ENCODE measurements at regions of chr1 and their contacts with region 1.

Region 1: DNA sequence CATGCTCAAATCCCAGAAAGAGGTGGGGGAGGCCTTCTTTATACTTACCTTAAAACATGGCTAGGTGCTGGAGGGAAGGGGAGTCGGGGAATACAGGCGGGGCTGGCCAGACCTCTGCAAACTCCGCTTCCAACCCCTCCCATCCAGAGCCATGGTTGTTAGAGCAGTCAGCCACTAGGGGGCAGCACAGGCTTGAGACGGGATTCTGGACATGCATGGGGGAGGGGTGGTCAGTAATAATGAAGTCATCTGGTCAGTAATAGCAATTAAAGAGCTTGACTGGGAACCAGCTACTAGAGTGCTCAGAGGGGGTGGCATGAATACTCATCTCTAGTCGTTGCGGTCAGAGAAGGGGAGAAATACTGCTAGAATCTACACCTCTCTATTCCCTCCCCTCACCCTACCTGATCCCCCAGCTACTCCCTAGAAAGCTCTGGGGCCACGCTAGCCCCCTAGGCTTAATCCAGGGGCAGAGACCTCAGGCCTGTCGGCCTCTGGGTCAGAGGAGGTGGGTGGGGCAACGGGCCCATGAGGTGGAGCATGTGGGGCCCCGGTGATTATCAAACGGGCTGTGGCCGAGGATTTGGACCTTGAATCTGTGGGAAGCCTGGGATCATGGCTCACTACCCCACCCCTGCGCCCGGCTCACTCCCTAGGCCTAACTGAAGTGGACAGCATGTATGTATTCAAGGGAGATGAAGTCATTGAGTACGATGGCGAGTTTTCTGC is 2.9 kb downstream of the CASQ1 start:
- DNase-seq: peak; percentile 86
- ATAC-seq: peak; percentile 93
- H3K4me3 Mint-ChIP-seq: no peak overlapping the region
- H3K27ac Mint-ChIP-seq: no peak overlapping the region
- H3K4me1 Mint-ChIP-seq: no peaks in the 10 kb centered on the region
- H3K27me3 Mint-ChIP-seq: peaks cover 2% of the 10 kb centered on the region
- CTCF ChIP-seq: peak; percentile 94

Region 2: GRCh38 chr1:160205242-160206035 is 12.2 kb after region 1 on chr1 and contains the start of gene PEA15:
- CTCF ChIA-PET with region 1: interaction called, 22 read pairs
- POLR2A ChIA-PET with region 1: interaction called, 6 read pairs
- intact Hi-C with region 1: no loop called
- DNase-seq: peak; percentile 70
- ATAC-seq: peak; percentile 76
- H3K4me3 Mint-ChIP-seq: peak within 1 kb of the TSS; percentile 82
- H3K27ac Mint-ChIP-seq: peak within 1 kb of the TSS; percentile 87
- H3K4me1 Mint-ChIP-seq: peaks cover 48% of the 10 kb centered on the region
- H3K27me3 Mint-ChIP-seq: no peaks in the 10 kb centered on the region
- CTCF ChIP-seq: no peak
- total RNA-seq, gene PEA15: 31.8 to 34.1 TPM

Region 3: DNA sequence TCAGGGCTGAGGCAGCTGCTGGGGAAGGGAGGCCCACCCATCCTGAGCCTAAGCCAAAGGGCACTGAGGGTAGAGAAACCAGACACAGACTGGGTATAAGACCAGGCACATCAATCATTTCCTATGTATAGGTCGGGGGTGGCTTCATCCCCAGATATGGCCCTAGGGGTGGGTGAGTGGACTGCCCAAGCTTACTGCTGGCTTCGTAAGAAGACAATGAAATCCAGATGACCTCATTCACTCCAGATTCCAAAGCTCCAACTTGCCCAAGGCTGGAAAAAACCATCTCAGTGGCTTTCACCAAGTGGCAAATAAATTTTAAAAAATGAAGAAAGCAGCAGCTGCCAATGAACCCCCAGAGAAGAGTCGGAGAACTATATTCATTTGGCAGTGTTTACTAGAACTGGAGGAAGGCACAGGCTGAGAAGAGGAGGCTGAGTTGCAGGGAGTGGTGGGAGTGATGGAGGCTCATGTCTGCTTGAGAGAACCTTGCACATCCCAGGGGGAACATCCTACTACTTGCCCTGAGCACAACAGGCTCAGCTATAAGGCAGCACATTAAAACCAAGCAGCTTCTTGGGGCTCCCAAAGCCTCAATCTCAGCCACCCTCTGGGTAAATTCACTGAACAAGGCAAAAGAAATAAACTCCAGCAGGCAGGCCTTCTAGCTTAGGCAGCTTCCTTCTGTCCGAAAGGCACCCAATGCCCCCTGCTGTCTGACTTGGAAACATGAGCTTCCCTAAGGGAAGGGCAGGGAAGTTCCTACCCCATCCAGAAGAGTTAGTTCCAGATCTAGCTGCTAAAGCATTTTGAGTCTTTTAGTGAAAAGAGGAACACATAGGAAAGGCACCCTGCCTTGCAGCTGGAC is 26.0 kb after region 1 on chr1:
- CTCF ChIA-PET with region 1: interaction called, 10 read pairs
- POLR2A ChIA-PET with region 1: no interaction called
- intact Hi-C with region 1: no loop called
- DNase-seq: no peak
- ATAC-seq: no peak
- H3K4me3 Mint-ChIP-seq: no peak overlapping the region
- H3K27ac Mint-ChIP-seq: no peak overlapping the region
- H3K4me1 Mint-ChIP-seq: no peaks in the 10 kb centered on the region
- H3K27me3 Mint-ChIP-seq: no peaks in the 10 kb centered on the region
- CTCF ChIP-seq: no peak

Region 4: DNA sequence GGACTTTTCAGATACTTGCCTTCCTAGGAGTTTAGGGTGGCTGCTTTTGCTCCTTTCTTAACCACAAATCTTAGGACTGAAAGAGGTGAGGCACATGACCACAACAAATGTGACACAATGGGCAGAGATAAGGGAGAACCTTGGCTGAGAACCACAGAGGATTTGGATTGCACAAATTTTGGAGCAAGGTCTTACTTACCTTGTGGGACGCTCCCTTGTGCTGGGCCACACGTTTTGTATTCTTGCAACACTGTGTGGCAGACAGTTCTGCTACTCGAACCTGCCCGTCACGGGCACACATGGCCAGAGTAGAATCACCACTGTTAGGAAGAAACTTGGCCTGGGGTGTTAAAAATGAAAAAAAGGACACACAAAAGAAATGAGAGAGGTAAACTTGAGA is 45.2 kb after region 1 on chr1:
- CTCF ChIA-PET with region 1: interaction called, 10 read pairs
- POLR2A ChIA-PET with region 1: no interaction called
- intact Hi-C with region 1: no loop called
- DNase-seq: no peak
- ATAC-seq: no peak
- H3K4me3 Mint-ChIP-seq: no peak overlapping the region
- H3K27ac Mint-ChIP-seq: no peak overlapping the region
- H3K4me1 Mint-ChIP-seq: peaks cover 16% of the 10 kb centered on the region
- H3K27me3 Mint-ChIP-seq: no peaks in the 10 kb centered on the region
- CTCF ChIP-seq: no peak

Region 5: DNA sequence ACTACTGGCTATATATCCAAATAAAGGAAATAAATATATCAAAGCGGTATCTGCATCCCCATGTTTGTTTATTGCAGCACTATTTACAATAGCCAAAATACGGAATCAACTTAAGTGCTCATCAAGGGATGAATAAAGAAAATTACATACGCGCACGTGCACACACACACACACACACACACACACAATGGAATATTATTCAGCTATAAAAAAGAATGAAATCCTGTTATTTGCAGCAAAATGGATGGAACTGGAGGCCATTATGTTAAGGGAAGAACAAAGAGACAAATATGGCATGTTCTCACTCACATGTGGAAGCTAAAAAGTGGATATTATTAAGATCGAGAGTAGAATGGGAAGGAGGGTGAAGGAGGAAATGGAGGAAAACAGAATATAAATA is 129.6 kb after region 1 on chr1:
- CTCF ChIA-PET with region 1: no interaction called
- POLR2A ChIA-PET with region 1: no interaction called
- intact Hi-C with region 1: no loop called
- DNase-seq: no peak
- ATAC-seq: no peak
- H3K4me3 Mint-ChIP-seq: no peak overlapping the region
- H3K27ac Mint-ChIP-seq: no peak overlapping the region
- H3K4me1 Mint-ChIP-seq: peaks cover 11% of the 10 kb centered on the region
- H3K27me3 Mint-ChIP-seq: no peaks in the 10 kb centered on the region
- CTCF ChIP-seq: no peak